ENCODE measurements at regions of chr19 and their contacts with region 1.

Region 1: DNA sequence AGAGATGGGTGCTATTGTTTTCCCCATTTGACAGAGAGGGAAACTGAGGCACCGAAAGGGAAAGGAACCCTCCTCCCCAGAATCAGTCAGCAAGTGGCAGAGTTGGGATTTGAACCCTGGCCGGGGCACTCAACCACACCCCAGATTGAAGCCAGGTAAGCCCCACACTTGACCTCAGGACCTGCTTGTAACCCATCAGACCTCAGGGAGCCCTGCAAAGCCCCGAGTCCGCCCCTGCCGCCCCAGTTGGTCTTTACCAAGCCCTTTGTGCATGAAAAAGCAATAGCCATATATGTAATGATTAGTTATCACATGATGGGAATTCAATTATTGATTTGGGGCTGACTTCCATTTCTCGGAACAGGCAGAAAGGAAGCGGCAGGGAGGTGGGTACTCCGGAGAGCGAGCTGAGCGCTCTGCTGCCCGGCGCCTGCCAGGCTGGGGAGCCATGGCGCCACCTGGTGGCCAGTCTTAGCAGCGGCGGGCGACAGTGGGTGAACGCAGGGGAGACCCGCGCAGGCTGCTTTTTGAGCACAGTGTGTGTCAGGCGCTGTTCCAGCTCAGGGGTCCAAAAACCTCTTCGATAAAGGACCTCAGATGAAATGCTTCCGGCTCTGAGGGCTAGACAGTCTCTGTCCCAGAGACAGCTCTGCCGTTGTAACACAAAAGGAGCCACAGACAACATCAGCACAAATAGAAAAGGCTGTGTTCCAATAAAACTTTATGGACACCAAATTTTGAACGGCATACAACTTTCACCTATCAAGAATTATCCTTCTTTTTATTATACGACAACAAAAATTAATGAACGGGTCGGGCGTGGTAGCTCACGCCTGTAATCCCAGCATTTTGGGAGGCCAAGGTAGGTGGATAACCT is 82.9 kb upstream of the CACNA1A start:
- DNase-seq: peak; percentile 90
- ATAC-seq: peak; percentile 97
- H3K4me3 Mint-ChIP-seq: no peak overlapping the region
- H3K27ac Mint-ChIP-seq: no peak overlapping the region
- H3K4me1 Mint-ChIP-seq: no peaks in the 10 kb centered on the region
- H3K27me3 Mint-ChIP-seq: peaks cover 2% of the 10 kb centered on the region
- CTCF ChIP-seq: peak; percentile 95

Region 2: GRCh38 chr19:13277104-13277809 is 311.9 kb before region 1 on chr19:
- CTCF ChIA-PET with region 1: interaction called, 34 read pairs
- POLR2A ChIA-PET with region 1: no interaction called
- DNase-seq: peak; percentile 48
- ATAC-seq: peak; percentile 76
- H3K4me3 Mint-ChIP-seq: no peak overlapping the region
- H3K27ac Mint-ChIP-seq: no peak overlapping the region
- H3K4me1 Mint-ChIP-seq: peaks cover 6% of the 10 kb centered on the region
- H3K27me3 Mint-ChIP-seq: no peaks in the 10 kb centered on the region
- CTCF ChIP-seq: peak; percentile 65

Region 3: GRCh38 chr19:13548131-13548530 is 41.1 kb before region 1 on chr19:
- CTCF ChIA-PET with region 1: no interaction called
- POLR2A ChIA-PET with region 1: no interaction called
- DNase-seq: no peak
- ATAC-seq: no peak
- H3K4me3 Mint-ChIP-seq: no peak overlapping the region
- H3K27ac Mint-ChIP-seq: no peak overlapping the region
- H3K4me1 Mint-ChIP-seq: no peaks in the 10 kb centered on the region
- H3K27me3 Mint-ChIP-seq: peaks cover 9% of the 10 kb centered on the region
- CTCF ChIP-seq: no peak

Region 4: GRCh38 chr19:13574933-13575332 is 14.3 kb before region 1 on chr19:
- CTCF ChIA-PET with region 1: interaction called, 49 read pairs
- POLR2A ChIA-PET with region 1: interaction called, 4 read pairs
- DNase-seq: peak; percentile 47
- ATAC-seq: peak; percentile 53; the same call in 1 of the 2 replicates
- H3K4me3 Mint-ChIP-seq: no peak overlapping the region
- H3K27ac Mint-ChIP-seq: no peak overlapping the region
- H3K4me1 Mint-ChIP-seq: peaks cover 3% of the 10 kb centered on the region; the same call in 1 of the 2 replicates
- H3K27me3 Mint-ChIP-seq: peaks cover 10% of the 10 kb centered on the region
- CTCF ChIP-seq: no peak

Region 5: DNA sequence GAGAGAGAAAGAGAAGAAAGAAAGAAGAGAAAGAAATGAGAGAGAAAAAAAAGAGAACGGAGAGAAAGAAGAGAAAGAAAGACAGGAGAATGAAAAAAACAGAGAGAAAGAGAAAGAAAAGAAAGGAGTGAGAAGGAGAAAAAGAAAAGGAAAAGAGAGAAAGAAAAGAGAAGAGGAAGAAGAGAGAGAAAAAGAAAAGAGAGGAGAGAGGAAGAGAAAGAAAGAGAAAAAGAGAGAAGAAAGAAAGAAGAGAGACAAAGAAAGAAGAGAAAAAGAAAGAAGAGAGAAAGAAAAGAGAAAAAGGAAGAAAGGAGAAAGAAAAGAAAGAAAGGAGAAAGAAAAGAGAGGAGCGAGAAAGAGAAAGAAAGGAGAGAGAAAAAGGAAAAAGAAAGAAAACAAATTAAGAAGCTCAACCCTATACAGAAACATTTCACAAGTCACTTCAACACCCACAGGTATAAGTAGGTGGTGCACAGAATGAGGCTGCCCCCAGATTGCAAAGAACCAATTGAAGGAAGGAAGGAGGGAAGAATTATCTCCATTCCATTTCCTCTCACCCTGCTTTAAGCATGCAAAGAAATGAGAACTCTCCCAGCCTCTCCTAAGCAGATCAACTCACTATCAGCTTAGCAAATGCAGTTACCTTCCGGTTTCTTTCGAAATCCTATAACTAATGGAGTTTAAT is 15.8 kb after region 1 on chr19:
- CTCF ChIA-PET with region 1: interaction called, 12 read pairs
- POLR2A ChIA-PET with region 1: no interaction called
- DNase-seq: no peak
- ATAC-seq: peak; percentile 63
- H3K4me3 Mint-ChIP-seq: no peak overlapping the region
- H3K27ac Mint-ChIP-seq: no peak overlapping the region
- H3K4me1 Mint-ChIP-seq: peaks cover 19% of the 10 kb centered on the region
- H3K27me3 Mint-ChIP-seq: no peaks in the 10 kb centered on the region
- CTCF ChIP-seq: no peak

Region 6: GRCh38 chr19:13705928-13706447 is 116.8 kb after region 1 on chr19:
- CTCF ChIA-PET with region 1: no interaction called
- POLR2A ChIA-PET with region 1: no interaction called
- DNase-seq: no peak
- ATAC-seq: no peak
- H3K4me3 Mint-ChIP-seq: no peak overlapping the region
- H3K27ac Mint-ChIP-seq: no peak overlapping the region
- H3K4me1 Mint-ChIP-seq: no peaks in the 10 kb centered on the region
- H3K27me3 Mint-ChIP-seq: peaks cover 11% of the 10 kb centered on the region
- CTCF ChIP-seq: no peak

Region 7: GRCh38 chr19:13726323-13726722 is 137.1 kb after region 1 on chr19:
- CTCF ChIA-PET with region 1: interaction called, 17 read pairs
- POLR2A ChIA-PET with region 1: no interaction called
- DNase-seq: no peak
- ATAC-seq: no peak
- H3K4me3 Mint-ChIP-seq: no peak overlapping the region
- H3K27ac Mint-ChIP-seq: no peak overlapping the region
- H3K4me1 Mint-ChIP-seq: peaks cover 8% of the 10 kb centered on the region
- H3K27me3 Mint-ChIP-seq: no peaks in the 10 kb centered on the region; the same call in 1 of the 2 replicates
- CTCF ChIP-seq: no peak

Measured in WTC11 (cell line).